ENCODE measurements at regions of chr11 and their contacts with region 1.

Region 1: DNA sequence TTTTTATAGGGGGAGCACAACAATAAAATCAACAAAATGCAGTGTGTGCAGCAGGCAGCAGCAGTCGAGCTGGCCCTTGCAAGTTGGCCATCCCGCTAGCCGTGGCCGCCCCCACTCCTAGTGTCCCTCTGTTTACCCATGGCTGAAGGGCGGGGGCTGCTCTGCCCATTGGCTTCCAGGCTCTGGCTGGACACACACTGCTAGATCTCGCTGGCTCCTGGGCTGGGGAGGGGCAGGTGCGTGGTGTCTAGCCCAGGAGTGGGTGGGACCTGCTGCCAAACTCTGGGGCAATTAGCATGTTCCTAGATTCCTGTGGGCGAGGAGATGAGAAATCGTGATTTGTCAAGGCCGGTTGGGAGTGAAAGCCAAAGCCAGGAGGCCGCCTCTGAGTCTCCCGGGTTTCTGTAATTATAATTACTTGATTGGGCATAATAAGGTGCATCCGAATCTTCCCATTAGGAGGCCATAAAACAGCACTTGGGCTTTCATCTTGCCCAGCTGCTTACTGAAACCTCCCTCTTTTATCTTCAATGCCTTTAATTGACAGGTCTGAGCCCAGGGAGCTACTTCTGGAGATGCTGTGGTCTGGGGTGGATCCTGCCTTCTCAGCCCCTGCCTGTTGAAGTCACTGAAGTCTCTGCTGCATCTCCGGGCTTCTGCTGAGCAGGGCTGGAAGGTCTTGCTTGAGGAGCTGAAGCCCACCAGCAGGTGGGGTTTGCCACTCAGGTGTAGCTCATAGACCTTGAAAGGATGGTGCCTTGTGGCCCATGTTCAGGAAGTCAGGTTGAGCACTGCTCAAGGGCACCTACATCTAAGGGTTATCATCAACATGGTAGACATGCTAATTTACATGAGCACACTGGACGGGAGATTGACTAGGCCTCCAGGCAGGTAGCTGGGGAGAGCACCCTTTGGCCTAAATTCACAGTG is 44.5 kb upstream of the DKK3 start:
- DNase-seq: peak in 2 of 3 donors; percentile 71 to 92
- ATAC-seq: peak in 3 of 4 donors; percentile 3 to 38 (median 5)
- H3K4me3 ChIP-seq: no peak overlapping the region
- H3K27ac ChIP-seq: peak overlapping the region in 2 of 3 donors; percentile 26 to 65
- H3K4me1 ChIP-seq: peaks cover 0 to 49% (median 20%) of the 10 kb centered on the region in 4 donors
- H3K27me3 ChIP-seq: no peaks in the 10 kb centered on the region
- CTCF ChIP-seq: no peak
- POLR2A ChIP-seq: no peak

Region 2: DNA sequence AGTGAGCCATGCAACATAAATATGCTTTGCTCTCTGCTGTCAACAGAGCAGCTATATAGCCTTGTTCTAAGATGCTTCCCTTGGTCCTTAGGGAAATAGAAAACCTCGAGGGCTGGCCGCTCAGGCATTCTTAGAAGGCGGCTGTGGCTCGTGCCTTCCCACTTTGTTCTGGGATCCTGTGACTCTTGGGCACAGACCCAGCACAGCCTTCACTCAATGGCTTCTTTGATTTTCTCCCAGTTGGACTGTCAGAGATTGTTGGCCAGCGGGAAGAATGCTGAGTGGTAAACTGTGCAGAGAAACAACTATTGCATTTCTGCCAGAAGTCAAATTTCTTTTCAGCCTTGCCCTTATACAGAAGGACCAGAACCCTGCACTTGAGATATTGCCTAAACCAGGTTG is 47.9 kb after region 1 on chr11:
- intact Hi-C with region 1: no loop called
- DNase-seq: no peak
- ATAC-seq: no peak
- H3K4me3 ChIP-seq: no peak overlapping the region
- H3K27ac ChIP-seq: no peak overlapping the region
- H3K4me1 ChIP-seq: no peaks in the 10 kb centered on the region
- H3K27me3 ChIP-seq: no peaks in the 10 kb centered on the region
- CTCF ChIP-seq: no peak
- POLR2A ChIP-seq: no peak

Region 3: DNA sequence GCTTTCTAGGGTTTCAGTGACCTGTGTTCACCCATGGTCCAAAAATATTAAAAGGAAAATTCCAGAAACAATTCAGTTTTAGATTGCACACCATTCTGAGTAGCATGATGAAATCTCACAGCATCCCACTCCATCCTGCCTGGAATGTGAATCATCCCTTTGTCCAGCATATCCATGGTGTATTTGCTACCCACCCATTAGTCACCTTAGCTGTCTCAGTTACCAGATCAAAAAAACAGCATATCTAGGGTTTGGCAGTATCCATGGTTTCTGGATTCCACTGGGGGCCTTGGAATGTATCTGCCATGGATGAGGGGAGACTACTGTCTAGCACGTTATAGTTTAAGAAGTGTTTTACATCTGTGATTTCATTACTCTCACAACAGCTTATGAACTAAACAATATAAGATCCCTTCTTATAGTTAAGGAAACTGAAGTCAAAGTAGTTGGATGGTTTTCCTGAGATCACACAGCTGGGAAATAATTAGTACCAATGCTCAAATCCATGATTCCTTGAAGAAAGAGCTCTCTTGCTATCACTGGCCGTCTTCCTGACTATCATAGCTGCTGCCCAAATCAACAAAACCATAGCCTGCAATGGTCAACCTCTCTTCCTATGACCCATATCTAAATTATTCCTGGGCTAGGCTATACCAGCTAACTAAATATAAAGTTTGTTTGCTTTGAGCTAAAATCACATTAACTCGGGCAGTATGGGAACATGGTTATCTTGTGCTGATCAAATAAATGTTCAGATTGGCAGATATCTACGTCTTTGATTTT is 180.1 kb after region 1 on chr11:
- intact Hi-C with region 1: loop called in 1 of 2 experiments (anchors 5 kb)
- DNase-seq: no peak
- ATAC-seq: no peak
- H3K4me3 ChIP-seq: no peak overlapping the region
- H3K27ac ChIP-seq: no peak overlapping the region
- H3K4me1 ChIP-seq: no peaks in the 10 kb centered on the region
- H3K27me3 ChIP-seq: no peaks in the 10 kb centered on the region
- CTCF ChIP-seq: no peak
- POLR2A ChIP-seq: no peak

Region 4: GRCh38 chr11:12281571-12282478 is 228.9 kb after region 1 on chr11:
- intact Hi-C with region 1: loop called (anchors 5 kb)
- DNase-seq: peak; percentile 76 to 82 (median 81)
- ATAC-seq: peak; percentile 88 to 96 (median 92)
- H3K4me3 ChIP-seq: no peak overlapping the region
- H3K27ac ChIP-seq: no peak overlapping the region
- H3K4me1 ChIP-seq: no peaks in the 10 kb centered on the region
- H3K27me3 ChIP-seq: no peaks in the 10 kb centered on the region
- CTCF ChIP-seq: peak; percentile 90 to 97 (median 96)
- POLR2A ChIP-seq: no peak